K562 (cell line): ENCODE measurements at regions of chr4 and their contacts with region 1.

Region 1: GRCh38 chr4:20248155-20248558 is 3.5 kb upstream of the SLIT2 start:
- DNase-seq: peak in 1 of 4 experiments; percentile 9
- ATAC-seq: peak; percentile 31; the same call in 1 of the 3 replicates
- H3K4me3 ChIP-seq: no peak overlapping the region
- H3K27ac ChIP-seq: no peak overlapping the region
- H3K4me1 ChIP-seq: peaks cover 0 to 7% of the 10 kb centered on the region in 2 experiments; a peak in 2 of 5 replicates
- H3K27me3 ChIP-seq: peaks cover 0 to 7% of the 10 kb centered on the region in 2 experiments; a peak in 2 of 5 replicates
- CTCF ChIP-seq: peak in 2 of 3 experiments; percentile 34 to 46; a peak in 3 of 6 replicates
- EP300 ChIP-seq: no peak
- POLR2A ChIP-seq: no peak
- RAD21 ChIP-seq: no peak

Region 2: GRCh38 chr4:18689308-18690115 is 1558.6 kb before region 1 on chr4:
- CTCF ChIA-PET with region 1: no interaction called
- POLR2A ChIA-PET with region 1: no interaction called
- in situ Hi-C with region 1: no loop called
- intact Hi-C with region 1: loop called (anchors 2 kb)
- DNase-seq: peak; percentile 20 to 54 (median 26)
- ATAC-seq: peak; percentile 57; the same call in 1 of the 3 replicates
- H3K4me3 ChIP-seq: no peak overlapping the region
- H3K27ac ChIP-seq: no peak overlapping the region
- H3K4me1 ChIP-seq: no peaks in the 10 kb centered on the region
- H3K27me3 ChIP-seq: no peaks in the 10 kb centered on the region
- CTCF ChIP-seq: peak; percentile 50 to 77 (median 59)
- EP300 ChIP-seq: no peak
- POLR2A ChIP-seq: no peak
- RAD21 ChIP-seq: peak; percentile 72 to 83

Region 3: DNA sequence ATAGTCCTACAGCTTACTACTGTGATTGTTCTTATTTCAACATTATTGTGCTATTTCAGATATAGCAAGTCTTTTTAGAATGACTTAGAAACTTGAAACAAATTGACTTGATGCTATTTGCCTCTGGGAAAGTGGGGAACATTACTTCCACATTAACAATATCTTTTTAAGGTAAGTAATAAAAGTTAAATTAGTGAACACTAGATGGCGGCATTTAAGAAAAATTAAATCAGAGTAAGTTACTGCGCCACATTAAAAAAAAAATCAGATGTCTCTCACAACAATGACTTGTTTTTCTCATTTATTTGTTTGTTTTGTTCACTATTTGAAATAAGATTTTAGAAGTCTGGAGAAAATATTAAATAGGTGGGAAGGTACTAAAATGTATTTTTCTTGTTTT is 1023.3 kb before region 1 on chr4:
- CTCF ChIA-PET with region 1: no interaction called
- POLR2A ChIA-PET with region 1: no interaction called
- in situ Hi-C with region 1: no loop called
- intact Hi-C with region 1: loop called (anchors 10 kb)
- DNase-seq: peak in 2 of 4 experiments; percentile 3 to 6
- ATAC-seq: no peak
- H3K4me3 ChIP-seq: no peak overlapping the region
- H3K27ac ChIP-seq: no peak overlapping the region
- H3K4me1 ChIP-seq: no peaks in the 10 kb centered on the region
- H3K27me3 ChIP-seq: no peaks in the 10 kb centered on the region
- CTCF ChIP-seq: peak in 1 of 3 experiments; percentile 24; a peak in 2 of 6 replicates
- EP300 ChIP-seq: no peak
- POLR2A ChIP-seq: no peak
- RAD21 ChIP-seq: peak; percentile 24 to 35; a peak in 2 of 4 replicates